ENCODE measurements at regions of chr10 and their contacts with region 1.

Region 1: GRCh38 chr10:108544494-108545120 is 1378.7 kb downstream of the XPNPEP1 start:
- DNase-seq: no peak
- ATAC-seq: peak; percentile 90
- H3K4me3 ChIP-seq: no peak overlapping the region
- H3K27ac ChIP-seq: no peak overlapping the region
- H3K4me1 ChIP-seq: no peaks in the 10 kb centered on the region; the same call in 1 of the 2 replicates
- H3K27me3 ChIP-seq: no peaks in the 10 kb centered on the region
- CTCF ChIP-seq: peak; percentile 79 to 97 (median 92)
- EP300 ChIP-seq: no peak
- POLR2A ChIP-seq: no peak
- RAD21 ChIP-seq: peak; percentile 90

Region 2: GRCh38 chr10:107814865-107815487 is 729.6 kb before region 1 on chr10:
- CTCF ChIA-PET with region 1: interaction called, 3 read pairs
- POLR2A ChIA-PET with region 1: no interaction called
- RAD21 ChIA-PET with region 1: interaction called, 3 read pairs
- SMC1A ChIA-PET with region 1: no interaction called
- in situ Hi-C with region 1: no loop called
- intact Hi-C with region 1: loop called (anchors 5 kb)
- DNase-seq: peak; percentile 20
- ATAC-seq: peak; percentile 95
- H3K4me3 ChIP-seq: no peak overlapping the region
- H3K27ac ChIP-seq: no peak overlapping the region
- H3K4me1 ChIP-seq: no peaks in the 10 kb centered on the region
- H3K27me3 ChIP-seq: no peaks in the 10 kb centered on the region
- CTCF ChIP-seq: peak; percentile 59 to 81 (median 74)
- EP300 ChIP-seq: no peak
- POLR2A ChIP-seq: no peak
- RAD21 ChIP-seq: peak; percentile 87

Region 3: DNA sequence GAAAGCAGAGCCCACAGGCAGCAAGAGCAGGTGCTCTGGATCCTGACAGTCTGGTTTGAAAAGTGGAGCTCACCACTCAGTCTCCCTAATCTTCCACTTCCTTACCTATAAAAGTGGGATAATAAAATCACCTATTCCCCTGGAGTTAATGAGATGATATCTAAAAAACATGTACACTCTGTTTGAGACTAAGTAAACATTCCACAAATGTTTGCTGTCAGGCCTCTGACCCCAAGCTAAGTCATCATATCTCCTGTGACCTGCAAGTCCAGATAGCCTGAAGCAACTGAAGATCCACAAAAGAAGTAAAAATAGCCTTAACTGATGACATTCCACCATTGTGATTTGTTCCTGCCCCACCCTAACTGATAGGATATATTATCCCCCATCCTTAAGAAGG is 54.2 kb after region 1 on chr10:
- CTCF ChIA-PET with region 1: interaction called, 6 read pairs
- POLR2A ChIA-PET with region 1: no interaction called
- RAD21 ChIA-PET with region 1: interaction called, 4 read pairs
- SMC1A ChIA-PET with region 1: interaction called, 4 read pairs
- in situ Hi-C with region 1: no loop called
- intact Hi-C with region 1: loop called (anchors 2 kb)
- DNase-seq: no peak
- ATAC-seq: no peak
- H3K4me3 ChIP-seq: no peak overlapping the region
- H3K27ac ChIP-seq: peak overlapping the region; percentile 63; the same call in 1 of the 2 replicates
- H3K4me1 ChIP-seq: no peaks in the 10 kb centered on the region
- H3K27me3 ChIP-seq: no peaks in the 10 kb centered on the region
- CTCF ChIP-seq: no peak
- EP300 ChIP-seq: no peak
- POLR2A ChIP-seq: no peak
- RAD21 ChIP-seq: no peak

Region 4: DNA sequence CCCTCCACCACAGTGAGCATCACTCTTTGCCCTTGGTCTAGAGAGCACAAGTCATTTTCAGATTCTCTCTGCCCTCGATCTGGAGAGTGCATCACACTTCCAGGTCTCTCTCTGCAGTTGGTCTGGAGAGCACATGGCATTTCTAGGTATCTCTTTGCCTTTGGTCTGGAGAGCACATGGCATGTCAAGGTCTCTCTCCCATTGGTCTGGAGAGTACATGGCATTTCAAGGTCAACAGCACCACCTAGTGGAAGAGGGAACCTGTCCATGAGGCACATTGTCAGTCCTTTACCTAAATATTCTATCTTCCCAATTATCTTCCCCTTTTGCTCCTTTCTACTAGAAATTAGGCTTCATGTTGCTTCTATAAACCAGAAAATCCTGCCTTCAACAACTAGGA is 239.3 kb after region 1 on chr10:
- CTCF ChIA-PET with region 1: interaction called, 4 read pairs
- POLR2A ChIA-PET with region 1: no interaction called
- RAD21 ChIA-PET with region 1: interaction called, 4 read pairs
- SMC1A ChIA-PET with region 1: no interaction called
- in situ Hi-C with region 1: no loop called
- intact Hi-C with region 1: loop called (anchors 1 kb)
- DNase-seq: peak; percentile 31
- ATAC-seq: peak; percentile 86
- H3K4me3 ChIP-seq: no peak overlapping the region
- H3K27ac ChIP-seq: no peak overlapping the region
- H3K4me1 ChIP-seq: no peaks in the 10 kb centered on the region
- H3K27me3 ChIP-seq: no peaks in the 10 kb centered on the region
- CTCF ChIP-seq: peak; percentile 59 to 67 (median 66)
- EP300 ChIP-seq: no peak
- POLR2A ChIP-seq: no peak
- RAD21 ChIP-seq: peak; percentile 83

Region 5: GRCh38 chr10:109018944-109019424 is 474.4 kb after region 1 on chr10:
- CTCF ChIA-PET with region 1: no interaction called
- POLR2A ChIA-PET with region 1: no interaction called
- RAD21 ChIA-PET with region 1: no interaction called
- SMC1A ChIA-PET with region 1: no interaction called
- in situ Hi-C with region 1: no loop called
- intact Hi-C with region 1: loop called (anchors 2 kb)
- DNase-seq: no peak
- ATAC-seq: peak; percentile 36; the same call in 1 of the 3 replicates
- H3K4me3 ChIP-seq: no peak overlapping the region
- H3K27ac ChIP-seq: no peak overlapping the region
- H3K4me1 ChIP-seq: no peaks in the 10 kb centered on the region
- H3K27me3 ChIP-seq: no peaks in the 10 kb centered on the region
- CTCF ChIP-seq: peak in 2 of 3 experiments; percentile 28 to 42; a peak in 2 of 6 replicates
- EP300 ChIP-seq: no peak
- POLR2A ChIP-seq: no peak
- RAD21 ChIP-seq: no peak